Caco-2 (cell line): ENCODE measurements at regions of chr5 and their contacts with region 1.

Region 1: GRCh38 chr5:149114403-149115312 is 26.6 kb upstream of the ABLIM3 start:
- DNase-seq: peak; percentile 70 to 79
- H3K4me3 ChIP-seq: no peak overlapping the region
- H3K4me3 Mint-ChIP-seq: no peak overlapping the region
- H3K27ac Mint-ChIP-seq: no peak overlapping the region
- H3K4me1 ChIP-seq: no peaks in the 10 kb centered on the region
- H3K4me1 Mint-ChIP-seq: no peaks in the 10 kb centered on the region
- H3K27me3 ChIP-seq: no peaks in the 10 kb centered on the region
- H3K27me3 Mint-ChIP-seq: peaks cover 26% of the 10 kb centered on the region
- CTCF ChIP-seq: peak; percentile 76 to 90

Region 2: GRCh38 chr5:148740966-148741742 is 373.5 kb before region 1 on chr5:
- CTCF ChIA-PET with region 1: interaction called, 23 read pairs
- POLR2A ChIA-PET with region 1: no interaction called
- intact Hi-C with region 1: loop called (anchors 1 kb)
- DNase-seq: peak in 1 of 2 experiments; percentile 45
- H3K4me3 ChIP-seq: no peak overlapping the region
- H3K4me3 Mint-ChIP-seq: no peak overlapping the region
- H3K27ac Mint-ChIP-seq: no peak overlapping the region
- H3K4me1 ChIP-seq: no peaks in the 10 kb centered on the region
- H3K4me1 Mint-ChIP-seq: no peaks in the 10 kb centered on the region
- H3K27me3 ChIP-seq: no peaks in the 10 kb centered on the region
- H3K27me3 Mint-ChIP-seq: peaks cover 11% of the 10 kb centered on the region
- CTCF ChIP-seq: peak; percentile 64 to 67

Region 3: DNA sequence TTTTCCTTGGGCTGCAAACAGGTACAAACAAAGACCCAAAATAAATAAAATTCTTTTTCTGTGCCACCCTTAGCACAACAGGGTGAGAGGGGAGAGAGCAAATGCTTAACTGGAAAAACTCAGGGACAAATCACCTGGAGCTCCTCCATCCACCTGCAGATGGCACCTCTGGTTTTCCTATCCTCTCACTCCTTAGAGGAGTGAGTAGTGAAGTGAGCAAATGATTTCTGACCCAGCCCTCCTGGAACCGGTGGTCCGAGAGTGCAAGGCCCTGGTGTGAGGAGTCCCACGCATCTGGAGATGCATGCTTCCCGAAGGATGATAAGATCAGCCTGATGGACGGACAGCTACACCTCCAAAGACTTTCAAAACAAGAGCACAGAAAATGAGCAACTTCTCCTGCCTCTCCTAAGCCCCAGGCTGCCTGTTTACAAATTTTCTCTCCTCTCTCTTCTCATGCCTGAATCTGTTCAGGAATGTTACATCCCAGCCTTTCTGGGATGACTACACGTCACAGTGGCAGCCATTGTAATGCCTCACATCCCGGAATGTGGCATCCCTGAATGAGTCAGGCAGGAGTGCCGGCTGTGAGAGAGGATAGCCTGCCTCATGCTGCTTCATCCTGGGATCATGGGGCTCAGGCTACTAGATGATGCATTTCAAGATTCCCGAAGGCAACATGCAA is 201.8 kb before region 1 on chr5:
- CTCF ChIA-PET with region 1: interaction called, 14 read pairs
- POLR2A ChIA-PET with region 1: no interaction called
- intact Hi-C with region 1: loop called (anchors 1 kb)
- DNase-seq: peak in 1 of 2 experiments; percentile 40
- H3K4me3 ChIP-seq: no peak overlapping the region
- H3K4me3 Mint-ChIP-seq: no peak overlapping the region
- H3K27ac Mint-ChIP-seq: peak overlapping the region; percentile 50
- H3K4me1 ChIP-seq: peaks cover 31% of the 10 kb centered on the region
- H3K4me1 Mint-ChIP-seq: peaks cover 6% of the 10 kb centered on the region
- H3K27me3 ChIP-seq: no peaks in the 10 kb centered on the region
- H3K27me3 Mint-ChIP-seq: peaks cover 3% of the 10 kb centered on the region
- CTCF ChIP-seq: peak; percentile 50 to 65

Region 4: DNA sequence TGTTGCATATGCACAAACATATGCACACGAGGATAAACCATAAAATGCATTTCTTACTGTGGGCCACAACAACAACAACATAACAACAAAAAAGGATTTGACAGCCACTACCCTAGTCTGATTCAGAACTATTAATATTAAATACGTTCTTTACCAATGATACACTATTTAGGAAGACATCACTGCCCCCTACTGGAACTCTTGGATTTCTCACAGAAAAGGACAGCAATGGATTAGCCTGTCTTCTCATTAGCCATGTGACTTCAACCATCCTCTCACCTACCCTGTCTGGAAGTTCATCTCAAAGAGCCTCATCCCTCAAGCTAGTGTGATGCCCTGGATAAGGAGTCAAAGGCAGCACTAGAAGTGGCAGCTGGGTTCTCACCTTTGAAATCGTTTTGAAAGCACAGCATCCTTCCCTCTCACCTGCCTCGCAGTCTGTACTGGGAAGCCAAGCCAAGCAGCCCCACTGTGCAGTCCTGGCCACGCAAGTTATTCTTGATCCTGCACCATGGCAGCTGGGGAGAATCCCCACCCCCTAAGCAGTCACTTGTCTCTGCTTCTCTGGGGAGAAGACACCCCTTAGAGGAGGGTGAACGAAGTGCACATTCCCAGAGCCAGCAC is 116.4 kb before region 1 on chr5:
- CTCF ChIA-PET with region 1: interaction called, 6 read pairs
- POLR2A ChIA-PET with region 1: no interaction called
- intact Hi-C with region 1: loop called (anchors 1 kb)
- DNase-seq: peak in 1 of 2 experiments; percentile 36
- H3K4me3 ChIP-seq: no peak overlapping the region
- H3K4me3 Mint-ChIP-seq: no peak overlapping the region
- H3K27ac Mint-ChIP-seq: no peak overlapping the region
- H3K4me1 ChIP-seq: peaks cover 22% of the 10 kb centered on the region
- H3K4me1 Mint-ChIP-seq: peaks cover 9% of the 10 kb centered on the region
- H3K27me3 ChIP-seq: no peaks in the 10 kb centered on the region
- H3K27me3 Mint-ChIP-seq: no peaks in the 10 kb centered on the region
- CTCF ChIP-seq: peak; percentile 53

Region 5: DNA sequence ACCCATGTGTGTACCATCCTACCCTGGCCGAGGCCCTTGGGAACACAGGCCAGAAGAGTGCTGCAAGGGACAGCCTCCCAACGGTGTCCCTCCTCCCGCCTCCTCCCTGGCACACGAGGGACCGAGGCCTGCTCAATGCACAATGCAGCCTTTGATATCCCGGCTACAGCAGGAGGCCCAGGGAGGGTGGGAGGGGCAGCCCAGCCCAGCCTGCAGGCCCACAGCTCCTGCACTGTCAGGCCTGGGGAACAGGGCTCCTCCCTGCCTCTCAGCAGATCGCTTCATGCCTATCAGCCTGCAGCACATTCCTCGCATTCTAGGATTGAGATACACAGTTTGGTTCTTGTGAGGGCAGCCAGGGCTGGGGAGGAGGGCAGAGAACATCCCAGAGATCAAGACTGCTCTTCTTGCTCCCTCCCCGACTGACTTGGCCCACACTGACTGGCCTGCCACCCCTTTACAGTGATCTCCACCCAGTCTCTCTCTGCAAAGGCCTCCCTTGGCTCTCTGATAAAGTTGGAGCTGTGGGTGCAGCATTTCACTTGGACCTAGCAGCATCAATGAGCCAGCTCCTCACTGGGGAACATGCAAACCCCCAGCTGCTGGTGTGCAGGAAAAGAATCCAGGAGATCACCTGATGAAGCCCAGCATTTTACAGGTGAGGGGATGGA is 51.5 kb before region 1 on chr5 and contains the start of gene SH3TC2:
- CTCF ChIA-PET with region 1: interaction called, 6 read pairs
- POLR2A ChIA-PET with region 1: no interaction called
- intact Hi-C with region 1: loop called (anchors 1 kb)
- DNase-seq: peak; percentile 77 to 91
- H3K4me3 ChIP-seq: no peak within 1 kb of the TSS
- H3K4me3 Mint-ChIP-seq: peak within 1 kb of the TSS; percentile 45
- H3K27ac Mint-ChIP-seq: peak within 1 kb of the TSS; percentile 43
- H3K4me1 ChIP-seq: peaks cover 37% of the 10 kb centered on the region
- H3K4me1 Mint-ChIP-seq: peaks cover 40% of the 10 kb centered on the region
- H3K27me3 ChIP-seq: no peaks in the 10 kb centered on the region
- H3K27me3 Mint-ChIP-seq: no peaks in the 10 kb centered on the region
- CTCF ChIP-seq: no peak
- total RNA-seq, gene SH3TC2: 5.3 and 5.8 TPM in 2 replicates